ENCODE measurements at regions of chr2 and their contacts with region 1.

Region 1: DNA sequence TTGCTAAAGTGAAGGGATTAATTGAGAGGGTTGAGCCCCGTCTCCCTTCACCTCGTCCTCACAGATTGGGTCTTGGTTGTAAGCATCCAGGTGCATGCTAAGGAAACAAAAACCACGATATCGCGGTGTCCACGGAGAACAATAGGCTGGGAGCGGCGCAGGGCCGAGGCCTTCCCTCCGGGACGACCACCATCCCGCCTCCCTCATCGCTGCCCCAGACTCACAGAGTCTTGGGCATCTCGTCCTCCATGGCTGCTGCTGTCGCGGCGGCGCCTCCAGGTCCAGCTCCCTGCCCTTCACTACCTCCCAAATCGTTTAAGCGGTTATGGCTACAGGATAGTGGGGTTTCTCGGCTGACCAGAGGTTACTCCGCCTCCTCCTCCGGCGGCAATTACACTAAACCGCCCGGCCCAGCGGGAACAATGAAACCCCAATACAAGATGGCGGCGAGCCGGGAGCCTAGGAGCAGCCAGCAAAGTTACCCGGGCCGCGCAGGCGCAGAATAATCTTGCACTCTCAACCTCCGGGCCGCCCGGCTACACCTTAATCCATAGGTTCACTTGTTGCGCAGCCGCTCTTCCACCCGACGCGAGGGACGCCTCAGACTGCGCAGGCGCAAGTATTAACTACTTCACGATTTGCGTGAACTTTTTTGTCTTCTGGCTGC is at the start of gene TIA1:
- DNase-seq: peak; percentile 96
- H3K4me3 ChIP-seq: peak within 1 kb of the TSS; percentile 95
- H3K27ac ChIP-seq: peak within 1 kb of the TSS; percentile 99
- H3K27me3 ChIP-seq: no peaks in the 10 kb centered on the region
- CTCF ChIP-seq: no peak
- polyA plus RNA-seq, gene TIA1: 139 and 192 TPM in 2 replicates

Region 2: DNA sequence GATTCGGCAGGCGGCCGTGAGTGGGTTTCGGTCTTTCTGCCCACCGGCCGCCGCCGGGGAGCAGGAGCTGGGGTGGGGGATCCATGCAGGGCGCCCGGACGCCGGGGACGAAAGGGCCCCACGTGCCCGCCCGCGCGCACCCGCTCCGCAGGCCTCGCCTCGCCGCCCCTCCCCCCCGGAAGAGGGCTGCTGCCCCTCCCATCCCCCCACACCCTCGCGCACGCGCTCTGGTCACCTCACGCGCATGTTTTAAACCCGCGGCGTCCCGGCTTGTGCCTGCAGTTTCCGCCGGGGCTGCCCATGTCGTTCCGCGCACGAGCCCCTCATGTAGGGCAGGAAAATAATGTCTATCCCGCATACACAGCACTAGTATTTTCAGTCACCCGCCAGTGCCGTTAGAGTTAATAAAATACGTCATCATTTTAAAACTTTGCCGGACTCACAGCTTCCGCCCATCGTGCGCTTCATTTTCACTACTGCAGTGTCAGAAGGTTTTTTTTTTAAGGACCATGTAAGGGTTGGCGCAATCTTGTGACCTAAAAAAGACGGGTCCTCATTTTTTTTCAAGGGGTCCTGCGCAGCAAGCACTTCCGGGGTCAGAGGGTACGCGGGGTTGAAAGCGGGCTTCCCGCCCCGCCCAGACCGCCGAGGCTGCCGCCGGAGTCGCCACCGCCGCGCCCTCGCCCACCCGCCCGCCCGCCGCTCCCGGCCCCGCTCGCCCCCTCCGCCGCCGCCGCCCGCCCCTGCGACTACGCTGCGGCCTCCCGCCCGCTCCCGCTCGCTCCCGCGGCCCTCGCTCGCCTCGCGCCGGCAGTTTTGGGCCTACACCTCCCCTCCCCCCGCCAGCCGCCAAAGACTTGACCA is 161.2 kb before region 1 on chr2 and contains the start of gene PCBP1:
- CTCF ChIA-PET with region 1: no interaction called
- POLR2A ChIA-PET with region 1: no interaction called
- DNase-seq: peak; percentile 85
- H3K4me3 ChIP-seq: peak within 1 kb of the TSS; percentile 97
- H3K27ac ChIP-seq: peak within 1 kb of the TSS; percentile 100
- H3K27me3 ChIP-seq: no peaks in the 10 kb centered on the region
- CTCF ChIP-seq: no peak
- polyA plus RNA-seq, gene PCBP1: 63.8 and 91.3 TPM in 2 replicates

Region 3: GRCh38 chr2:70233926-70234325 is 14.4 kb before region 1 on chr2:
- CTCF ChIA-PET with region 1: no interaction called
- POLR2A ChIA-PET with region 1: no interaction called
- DNase-seq: no peak
- H3K4me3 ChIP-seq: no peak overlapping the region
- H3K27ac ChIP-seq: no peak overlapping the region
- H3K27me3 ChIP-seq: no peaks in the 10 kb centered on the region
- CTCF ChIP-seq: no peak

Region 4: DNA sequence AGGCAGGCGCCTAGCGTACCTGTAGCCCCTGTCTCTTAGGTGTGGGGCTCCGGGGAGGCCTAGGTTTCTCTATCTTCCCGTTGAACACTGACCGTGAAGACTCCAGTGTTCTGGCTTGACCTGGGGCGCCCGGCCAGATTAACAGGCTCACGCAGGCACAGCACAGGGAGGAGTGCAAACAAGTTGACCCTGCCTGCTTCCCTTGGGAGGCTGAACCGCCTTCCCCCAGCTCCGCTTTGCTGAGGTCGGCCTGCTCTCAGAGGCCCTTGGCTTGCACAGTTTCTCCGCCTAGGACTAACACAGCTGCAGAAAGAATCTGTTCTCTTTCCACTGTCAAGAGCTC is 10.2 kb after region 1 on chr2:
- CTCF ChIA-PET with region 1: interaction called, 3 read pairs
- POLR2A ChIA-PET with region 1: interaction called, 10 read pairs
- DNase-seq: no peak
- H3K4me3 ChIP-seq: peak overlapping the region; percentile 77
- H3K27ac ChIP-seq: peak overlapping the region; percentile 11
- H3K27me3 ChIP-seq: no peaks in the 10 kb centered on the region
- CTCF ChIP-seq: no peak